Common myeloid progenitor, CD34-positive (primary cell): ENCODE measurements at regions of chr19 and their contacts with region 1.

Region 1: DNA sequence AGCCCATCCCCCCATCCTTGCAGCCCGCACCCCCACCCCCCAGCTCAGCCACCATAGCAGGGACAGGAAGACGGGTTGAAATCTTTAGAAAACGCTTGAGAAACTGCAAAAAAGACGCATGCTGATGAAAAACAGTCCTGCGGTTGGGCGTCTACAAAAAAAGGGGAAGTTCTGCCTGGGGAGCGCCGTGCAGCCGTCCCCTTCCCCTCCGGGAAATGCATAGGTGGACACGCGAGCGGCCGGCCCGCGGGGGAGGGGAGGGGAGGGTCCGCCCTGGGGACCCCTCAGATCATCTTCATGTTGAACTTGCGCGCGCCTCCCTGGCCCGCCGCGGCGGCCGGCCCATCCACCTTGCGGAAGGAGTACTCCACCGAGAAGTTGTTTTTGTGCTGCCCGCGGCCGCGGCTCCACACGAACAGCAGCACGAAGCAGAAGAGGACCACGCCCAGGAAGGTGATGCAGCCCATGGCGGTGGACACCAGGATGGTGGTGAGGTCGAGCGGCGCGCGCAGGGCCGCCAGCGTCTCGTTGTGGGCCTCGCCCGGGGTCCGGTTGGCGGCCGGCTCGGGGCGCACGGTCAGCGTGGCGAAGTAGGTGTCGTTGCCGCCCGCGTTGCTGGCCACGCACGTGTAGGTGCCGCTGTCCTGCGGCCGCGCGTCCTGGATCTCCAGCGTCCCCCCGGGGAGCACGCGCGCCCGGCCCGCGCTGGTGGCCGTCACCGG is 7.9 kb upstream of the PEAK3 start:
- DNase-seq: peak; percentile 87 to 96 (median 95)
- H3K4me3 ChIP-seq: peak overlapping the region; percentile 44 to 85 (median 74)
- H3K27ac ChIP-seq: peak overlapping the region; percentile 50 to 81
- H3K4me1 ChIP-seq: peaks cover 0 to 76% (median 72%) of the 10 kb centered on the region in 4 experiments
- H3K27me3 ChIP-seq: no peaks in the 10 kb centered on the region

Region 2: DNA sequence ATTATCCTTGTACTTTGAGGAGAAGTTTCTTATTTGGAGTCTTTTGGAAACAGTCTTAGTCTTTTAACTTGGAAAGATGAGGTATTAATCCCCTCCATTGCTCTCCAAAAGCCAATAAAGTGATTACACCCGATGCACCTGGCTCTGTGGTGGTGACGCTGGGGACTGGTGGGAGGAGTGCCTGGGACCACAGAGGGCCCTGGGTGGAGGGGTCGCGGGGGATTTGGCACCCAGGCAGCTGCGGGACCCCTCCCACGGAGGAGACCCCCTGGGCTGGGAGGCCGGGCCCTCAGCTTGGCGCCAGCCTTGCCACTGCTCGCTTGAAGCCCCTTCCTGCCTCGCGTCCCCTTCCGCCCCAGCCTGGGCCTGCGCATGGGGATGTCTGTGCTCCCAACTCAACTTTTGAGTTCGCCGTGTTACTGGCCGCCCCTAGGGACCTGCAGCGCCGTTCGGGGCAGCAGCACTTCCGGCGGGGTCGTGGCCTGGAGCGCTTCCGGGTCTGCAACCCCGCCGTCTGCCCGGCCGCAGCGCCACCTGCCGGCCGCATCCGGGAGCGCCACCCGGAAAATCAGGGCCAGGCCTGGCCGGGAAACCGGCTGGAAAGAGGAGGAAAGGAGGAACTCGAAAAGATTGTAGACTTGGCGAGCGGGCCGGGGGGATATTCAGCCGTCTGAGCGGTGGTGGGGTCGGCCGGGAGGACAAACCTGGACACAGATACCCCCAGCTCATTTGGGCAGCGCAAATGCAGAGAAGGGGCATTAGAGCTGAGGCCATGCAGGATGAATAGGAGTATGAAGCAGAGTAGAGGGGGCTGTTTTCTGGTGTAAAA is 16.3 kb before region 1 on chr19:
- CTCF ChIA-PET with region 1: interaction called, 23 read pairs
- POLR2A ChIA-PET with region 1: interaction called, 7 read pairs
- DNase-seq: peak; percentile 77 to 82 (median 78)
- H3K4me3 ChIP-seq: peak overlapping the region in 4 of 7 experiments; percentile 28 to 54 (median 44)
- H3K27ac ChIP-seq: peak overlapping the region in 1 of 2 experiments; percentile 58
- H3K4me1 ChIP-seq: peaks cover 5 to 44% (median 40%) of the 10 kb centered on the region in 4 experiments
- H3K27me3 ChIP-seq: no peaks in the 10 kb centered on the region

Region 3: DNA sequence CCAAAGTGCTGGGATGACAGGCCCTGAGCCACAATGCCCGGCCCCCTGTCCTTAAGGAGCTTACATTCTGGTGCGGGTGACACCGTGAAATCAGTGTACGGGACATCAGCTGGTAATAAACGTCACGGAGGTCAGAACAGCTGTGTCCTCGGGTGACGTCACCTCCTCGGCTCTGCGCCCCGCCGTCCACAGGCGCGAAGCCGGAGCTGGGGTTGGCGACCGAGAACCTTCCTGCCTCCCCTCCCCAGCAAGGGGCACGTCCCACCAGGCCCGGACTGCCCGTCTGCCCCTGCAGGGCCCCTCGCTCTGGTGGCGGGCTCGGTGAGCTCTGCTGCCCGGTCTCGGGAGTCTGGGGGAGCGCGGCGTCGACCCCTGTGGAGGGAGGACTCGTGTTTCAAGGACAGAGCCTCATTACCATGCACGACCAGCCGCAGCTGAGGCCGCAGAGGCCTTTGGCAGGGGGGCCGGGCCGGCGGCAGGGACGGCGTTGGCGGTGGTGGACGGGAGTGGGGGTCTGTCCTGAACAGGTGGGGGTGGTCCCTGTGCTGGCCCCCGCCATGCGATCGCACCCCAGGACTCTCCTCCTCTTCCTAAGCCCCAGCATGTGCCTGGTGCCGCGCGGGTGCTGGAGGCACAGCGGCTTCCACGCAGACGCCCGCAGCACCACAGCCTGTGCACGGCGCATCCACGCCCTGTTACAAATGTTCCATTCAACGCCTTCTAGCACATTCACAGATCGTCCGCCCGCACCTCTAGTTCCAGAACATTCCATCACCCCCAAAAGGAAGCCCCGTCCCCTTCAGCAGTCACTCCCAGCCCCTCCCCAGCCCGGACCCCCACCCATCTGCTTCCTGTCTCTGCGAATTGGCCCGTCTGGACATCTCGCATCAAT is 12.7 kb after region 1 on chr19:
- CTCF ChIA-PET with region 1: interaction called, 12 read pairs
- POLR2A ChIA-PET with region 1: interaction called, 7 read pairs
- DNase-seq: peak; percentile 49 to 77 (median 69)
- H3K4me3 ChIP-seq: peak overlapping the region in 4 of 7 experiments; percentile 15 to 60 (median 40)
- H3K27ac ChIP-seq: no peak overlapping the region
- H3K4me1 ChIP-seq: peaks cover 0 to 30% (median 20%) of the 10 kb centered on the region in 4 experiments
- H3K27me3 ChIP-seq: peaks cover 0 to 55% (median 26%) of the 10 kb centered on the region in 5 experiments

Region 4: DNA sequence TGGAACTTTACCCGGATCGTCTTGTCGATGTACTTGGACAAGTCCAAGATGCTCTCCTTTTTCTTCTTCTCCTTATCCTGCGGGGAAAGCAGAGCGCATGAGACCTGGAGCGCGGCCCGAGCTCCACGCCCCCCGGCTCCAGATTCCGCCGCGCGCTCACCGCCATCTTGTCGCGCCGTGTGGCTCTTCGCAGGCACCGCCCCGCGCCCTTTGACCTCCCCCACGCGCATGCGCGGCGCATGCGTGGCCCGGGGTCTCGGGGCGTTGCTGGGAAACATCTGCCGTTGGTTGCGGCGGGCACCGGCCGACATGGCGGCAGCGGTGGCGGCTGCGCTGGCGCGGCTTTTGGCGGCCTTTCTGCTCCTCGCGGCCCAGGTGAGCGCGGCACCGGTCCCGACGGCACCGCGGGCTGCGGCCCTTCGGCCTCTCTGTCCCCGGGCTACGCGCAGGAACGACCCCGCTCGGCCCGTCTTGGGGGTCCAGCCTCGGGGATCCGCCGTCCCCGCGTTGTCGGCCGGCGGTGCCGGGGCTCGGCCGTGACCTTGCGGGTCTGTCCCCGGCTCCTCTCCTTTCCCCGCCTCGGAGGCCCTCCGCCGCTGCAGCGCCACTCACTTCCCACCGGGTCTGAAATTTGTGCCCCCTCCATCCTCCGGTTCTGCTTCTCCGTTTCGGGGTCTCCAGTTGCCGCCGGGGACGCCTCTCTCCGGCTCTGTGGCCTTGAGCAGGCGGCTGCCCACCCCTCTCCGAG is 38.7 kb after region 1 on chr19 and contains the starts of genes LSM7 and SPPL2B:
- CTCF ChIA-PET with region 1: interaction called, 5 read pairs
- POLR2A ChIA-PET with region 1: interaction called, 13 read pairs
- DNase-seq: peak; percentile 89 to 96 (median 94)
- H3K4me3 ChIP-seq: peak within 1 kb of the TSS; percentile 70 to 98 (median 93)
- H3K27ac ChIP-seq: peak within 1 kb of the TSS; percentile 88 to 96
- H3K4me1 ChIP-seq: peaks cover 2 to 85% (median 81%) of the 10 kb centered on the region in 4 experiments
- H3K27me3 ChIP-seq: no peaks in the 10 kb centered on the region